ENCODE measurements at regions of chr1 and their contacts with region 1.

Region 1: GRCh38 chr1:145963995-145964901 is at the starts of genes ANKRD34A and POLR3GL:
- DNase-seq: peak; percentile 95
- ATAC-seq: peak; percentile 88
- H3K4me3 Mint-ChIP-seq: peak within 1 kb of the TSS; percentile 85
- H3K27ac Mint-ChIP-seq: peak within 1 kb of the TSS; percentile 87
- H3K4me1 Mint-ChIP-seq: peaks cover 33% of the 10 kb centered on the region
- H3K27me3 Mint-ChIP-seq: no peaks in the 10 kb centered on the region
- total RNA-seq, gene ANKRD34A: 5.8 to 6.1 TPM
- total RNA-seq, gene POLR3GL: 19.3 to 22.4 TPM

Region 2: DNA sequence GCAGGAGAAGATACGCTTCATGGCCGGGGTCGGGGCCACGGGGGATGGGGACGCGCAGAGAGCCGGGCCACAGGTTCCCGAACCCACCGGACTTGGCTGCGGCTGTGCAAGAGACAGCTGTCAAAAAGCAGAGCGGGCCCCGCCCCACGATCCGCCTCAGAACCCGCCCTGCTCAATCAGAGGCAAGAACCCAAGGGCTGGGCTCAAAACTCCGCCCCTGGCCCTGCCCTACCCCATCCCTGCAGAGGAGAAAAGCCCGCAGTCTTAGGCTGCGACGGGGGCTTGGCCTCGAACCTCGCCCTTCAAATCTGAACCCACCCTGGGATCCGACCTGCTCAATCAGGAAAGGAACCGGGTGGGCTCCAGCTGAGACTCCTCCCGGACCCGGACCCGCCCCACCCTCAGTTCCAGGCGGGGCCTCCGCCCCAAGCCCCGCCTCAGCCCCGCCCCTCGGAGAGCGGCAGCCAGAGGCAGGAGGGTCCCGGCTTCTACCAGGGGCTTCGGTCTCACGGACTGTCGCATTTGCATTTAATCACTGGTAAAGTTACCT is 78.4 kb before region 1 on chr1 and contains the start of gene ANKRD35:
- CTCF ChIA-PET with region 1: no interaction called
- POLR2A ChIA-PET with region 1: no interaction called
- intact Hi-C with region 1: loop called in 1 of 2 experiments (anchors 2 kb)
- DNase-seq: peak; percentile 92
- ATAC-seq: peak; percentile 100
- H3K4me3 Mint-ChIP-seq: peak within 1 kb of the TSS; percentile 72
- H3K27ac Mint-ChIP-seq: no peak within 1 kb of the TSS
- H3K4me1 Mint-ChIP-seq: peaks cover 14% of the 10 kb centered on the region
- H3K27me3 Mint-ChIP-seq: peaks cover 17% of the 10 kb centered on the region
- total RNA-seq, gene ANKRD35: 0.30 to 0.55 TPM

Region 3: DNA sequence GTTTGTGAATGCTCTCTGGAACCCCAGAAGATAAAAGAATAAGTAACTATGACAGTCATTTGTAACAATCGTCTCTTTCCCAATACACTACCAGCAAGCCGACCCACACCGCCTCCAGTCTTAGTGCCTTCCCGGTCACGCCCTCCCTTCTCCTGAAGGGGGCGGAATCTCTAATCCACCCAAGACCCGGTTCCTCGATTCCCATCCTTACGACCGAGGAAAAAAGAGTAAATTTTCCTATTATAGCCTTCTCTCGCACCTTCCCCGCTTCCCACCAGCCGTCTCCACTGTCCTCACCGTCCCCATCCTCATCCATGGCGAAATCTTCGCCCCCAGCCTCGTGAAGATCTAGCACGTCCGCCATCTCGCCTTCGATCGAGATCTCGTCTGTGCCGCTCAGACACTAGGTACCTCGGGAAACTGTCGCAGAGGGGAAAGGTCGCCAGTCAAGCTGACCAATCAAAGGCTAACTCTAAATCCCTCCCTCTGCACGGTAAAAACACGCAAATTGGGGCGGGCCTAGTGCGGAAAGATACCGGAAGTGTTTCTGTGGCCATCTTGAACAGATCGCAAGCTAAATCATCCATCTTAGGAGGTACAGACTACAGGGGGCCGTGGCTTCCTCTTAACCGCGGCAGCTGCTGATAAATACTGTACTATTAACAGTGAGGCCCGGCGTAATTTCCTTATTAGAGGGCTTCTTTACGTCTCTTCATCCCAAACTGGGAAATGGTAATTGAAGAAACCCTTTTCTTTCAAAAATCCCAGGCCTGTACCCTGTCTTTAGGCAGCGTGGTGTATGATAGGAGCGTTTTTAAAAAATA is 37.0 kb before region 1 on chr1 and contains the start of gene RBM8A:
- CTCF ChIA-PET with region 1: interaction called, 10 read pairs
- POLR2A ChIA-PET with region 1: interaction called, 18 read pairs
- intact Hi-C with region 1: loop called (anchors 1 kb)
- DNase-seq: peak; percentile 96
- ATAC-seq: peak; percentile 97
- H3K4me3 Mint-ChIP-seq: no peak within 1 kb of the TSS
- H3K27ac Mint-ChIP-seq: no peak within 1 kb of the TSS
- H3K4me1 Mint-ChIP-seq: peaks cover 28% of the 10 kb centered on the region
- H3K27me3 Mint-ChIP-seq: no peaks in the 10 kb centered on the region
- total RNA-seq, gene RBM8A: 293 to 330 TPM

Region 4: DNA sequence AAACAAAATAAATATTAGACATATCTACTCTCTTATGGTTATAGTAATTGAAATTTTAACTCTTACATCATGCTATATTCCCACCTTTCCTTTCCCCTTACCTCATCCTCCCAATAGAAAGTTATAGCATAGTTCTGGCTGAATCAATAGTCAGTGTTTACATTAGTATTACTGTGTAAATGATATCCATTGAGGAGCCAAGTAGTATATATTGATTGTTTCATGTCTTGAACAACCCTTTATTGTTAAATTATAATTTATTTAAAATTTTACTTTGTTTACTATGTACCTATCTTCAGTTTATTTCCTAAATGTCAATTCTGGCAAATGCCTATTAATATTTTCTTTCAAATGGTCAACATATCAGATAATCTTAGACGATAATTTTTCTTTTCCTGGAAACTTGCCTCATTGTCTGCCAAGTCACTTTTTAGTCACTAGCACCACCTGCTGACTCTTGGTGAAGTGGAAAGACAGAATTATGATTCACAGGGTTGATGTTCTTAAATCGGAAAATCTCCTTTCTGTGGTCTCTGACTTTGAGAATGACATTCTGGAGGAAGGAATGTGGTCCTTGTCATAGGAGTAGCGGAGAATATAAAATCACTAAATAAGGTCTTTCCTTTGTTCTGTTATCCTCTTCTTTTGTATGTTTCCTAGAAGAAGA is 48.6 kb after region 1 on chr1:
- CTCF ChIA-PET with region 1: interaction called, 14 read pairs
- POLR2A ChIA-PET with region 1: no interaction called
- intact Hi-C with region 1: no loop called
- DNase-seq: peak; percentile 71
- ATAC-seq: peak; percentile 81
- H3K4me3 Mint-ChIP-seq: no peak overlapping the region
- H3K27ac Mint-ChIP-seq: peak overlapping the region; percentile 21
- H3K4me1 Mint-ChIP-seq: peaks cover 7% of the 10 kb centered on the region
- H3K27me3 Mint-ChIP-seq: peaks cover 5% of the 10 kb centered on the region

Region 5: DNA sequence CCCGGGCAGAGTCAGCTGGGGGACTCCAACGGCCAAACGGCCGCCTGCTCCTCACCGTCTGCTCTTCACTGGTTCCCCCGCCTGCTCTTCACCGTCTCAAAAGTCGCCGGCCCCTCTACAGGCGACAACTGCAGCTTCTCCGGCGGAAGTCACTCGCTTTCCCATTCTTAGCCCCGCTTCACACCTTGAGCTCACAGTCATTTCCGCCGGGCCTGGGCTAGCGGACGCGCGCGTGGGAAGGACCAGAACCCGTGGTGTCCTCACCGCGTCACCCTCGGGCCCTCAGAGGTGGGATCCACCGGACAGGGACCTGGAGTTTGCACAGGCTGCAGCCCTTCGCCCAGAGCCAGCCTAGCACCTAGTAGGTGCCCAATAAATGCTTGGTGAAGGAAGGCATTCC is 85.2 kb after region 1 on chr1:
- CTCF ChIA-PET with region 1: no interaction called
- POLR2A ChIA-PET with region 1: interaction called, 38 read pairs
- intact Hi-C with region 1: loop called in 1 of 2 experiments (anchors 5 kb)
- DNase-seq: no peak
- ATAC-seq: no peak
- H3K4me3 Mint-ChIP-seq: no peak overlapping the region
- H3K27ac Mint-ChIP-seq: no peak overlapping the region
- H3K4me1 Mint-ChIP-seq: peaks cover 26% of the 10 kb centered on the region
- H3K27me3 Mint-ChIP-seq: no peaks in the 10 kb centered on the region